AG04450 (cell line): ENCODE measurements at regions of chr21 and their contacts with region 1.

Region 1: DNA sequence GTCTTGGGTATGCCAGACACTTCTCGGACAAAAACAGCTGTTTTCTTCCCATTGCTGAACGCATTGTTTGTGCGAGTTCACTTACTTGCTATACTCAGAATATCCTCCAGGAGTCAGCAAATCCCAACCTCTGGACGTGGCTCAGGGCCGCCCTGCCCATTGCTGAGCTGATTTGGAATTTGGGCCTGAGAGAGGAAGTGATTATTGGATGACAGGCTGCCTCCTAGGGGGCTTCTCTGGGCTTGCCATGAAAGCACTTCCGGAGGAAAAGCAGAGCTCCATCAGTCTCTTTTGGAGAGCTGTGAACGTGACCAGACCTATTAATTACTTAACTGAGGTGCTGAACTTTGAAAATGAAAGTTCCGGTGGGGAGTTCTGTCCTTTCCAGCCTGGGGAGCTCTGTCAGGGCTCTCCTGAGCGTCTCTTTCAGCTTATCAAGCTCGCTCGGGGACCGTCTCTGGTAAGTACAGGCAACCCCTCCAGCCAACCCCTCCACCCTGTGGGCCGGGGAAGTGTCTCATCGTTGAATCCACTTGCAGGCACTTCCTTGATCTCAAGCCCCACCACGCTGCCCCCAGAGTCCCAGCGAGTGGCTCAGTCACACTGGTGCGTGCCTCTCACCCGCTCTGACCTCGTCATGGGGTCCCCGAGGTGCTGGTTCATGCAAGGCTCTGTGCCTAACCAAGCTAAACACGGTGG is 76.9 kb downstream of the CLIC6 start:
- DNase-seq: peak; percentile 73
- H3K4me3 ChIP-seq: peak overlapping the region; percentile 23; the same call in 1 of the 2 replicates
- H3K27ac ChIP-seq: no peak overlapping the region
- H3K27me3 ChIP-seq: peaks cover 6% of the 10 kb centered on the region
- CTCF ChIP-seq: peak; percentile 94

Region 2: GRCh38 chr21:34526618-34527290 is 219.0 kb before region 1 on chr21:
- CTCF ChIA-PET with region 1: no interaction called
- POLR2A ChIA-PET with region 1: no interaction called
- DNase-seq: peak; percentile 100
- H3K4me3 ChIP-seq: peak overlapping the region; percentile 71
- H3K27ac ChIP-seq: peak overlapping the region; percentile 93
- H3K27me3 ChIP-seq: no peaks in the 10 kb centered on the region
- CTCF ChIP-seq: no peak

Region 3: DNA sequence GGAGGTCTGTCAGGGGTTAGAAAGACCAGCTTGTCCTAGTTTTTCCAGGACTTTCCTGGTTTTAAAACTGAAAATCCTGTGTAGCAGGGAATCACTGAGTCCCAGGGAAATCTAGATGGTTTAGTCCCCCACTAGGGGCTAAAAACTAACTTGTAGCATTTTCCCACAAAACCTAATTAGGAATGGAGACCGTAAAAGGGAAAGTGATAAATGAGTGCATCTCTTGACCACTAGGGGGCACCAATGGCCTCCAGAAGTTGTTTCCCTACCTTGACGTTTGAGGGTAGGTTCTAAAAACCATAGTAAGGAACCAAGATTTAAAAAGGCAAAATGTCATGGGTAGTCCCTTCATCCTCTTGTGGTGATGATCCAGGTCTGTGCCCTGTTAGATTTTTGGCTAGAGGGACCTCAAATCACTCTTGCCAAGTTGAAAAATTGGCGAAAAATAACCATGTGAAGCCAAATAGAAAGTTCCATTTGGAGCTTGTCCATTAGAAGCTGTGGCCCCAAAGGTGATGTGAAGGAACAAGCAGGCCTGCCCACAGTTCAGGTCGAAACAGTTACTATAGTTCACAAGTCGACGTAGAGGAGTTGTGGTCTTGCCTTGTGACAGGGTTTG is 52.4 kb before region 1 on chr21:
- CTCF ChIA-PET with region 1: interaction called, 12 read pairs
- POLR2A ChIA-PET with region 1: no interaction called
- DNase-seq: peak; percentile 39
- H3K4me3 ChIP-seq: no peak overlapping the region
- H3K27ac ChIP-seq: no peak overlapping the region
- H3K27me3 ChIP-seq: peaks cover 36% of the 10 kb centered on the region
- CTCF ChIP-seq: peak; percentile 86

Region 4: DNA sequence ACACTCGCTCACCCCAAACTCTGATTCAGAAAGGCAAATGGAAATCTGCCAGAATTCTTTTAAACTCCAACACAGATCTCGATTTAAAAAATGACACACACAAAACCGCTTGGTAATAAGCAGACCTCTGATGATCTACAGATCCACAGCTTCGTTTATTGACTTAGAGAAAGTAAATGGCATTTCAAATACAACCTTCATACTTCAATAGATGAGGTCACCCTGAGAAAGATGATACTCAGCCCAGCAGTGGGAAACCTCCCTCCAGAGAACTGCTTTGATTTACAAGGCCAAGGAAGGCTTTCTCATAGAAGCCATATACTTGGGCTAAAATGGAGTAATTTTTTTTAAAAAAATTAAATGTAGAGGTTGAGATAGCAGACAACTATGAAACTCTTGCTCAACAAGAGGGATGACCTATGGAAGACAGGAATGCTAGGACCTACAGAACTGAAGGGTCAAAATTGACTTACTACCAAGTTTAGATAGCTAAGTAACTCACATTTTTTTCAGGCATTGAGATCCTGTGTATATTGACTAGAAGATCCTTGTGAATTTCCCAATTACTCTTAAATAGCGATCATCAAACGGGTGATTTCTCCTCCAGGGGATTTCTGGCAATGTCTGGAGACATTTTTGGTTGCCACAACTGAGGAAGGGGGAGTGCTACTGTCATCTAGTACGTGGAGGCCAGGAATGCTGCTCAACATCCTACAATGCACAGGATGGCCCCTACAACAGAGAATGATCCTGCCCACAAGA is 67.0 kb after region 1 on chr21:
- CTCF ChIA-PET with region 1: interaction called, 14 read pairs
- POLR2A ChIA-PET with region 1: interaction called, 5 read pairs
- DNase-seq: peak; percentile 95
- H3K4me3 ChIP-seq: no peak overlapping the region
- H3K27ac ChIP-seq: peak overlapping the region; percentile 99
- H3K27me3 ChIP-seq: no peaks in the 10 kb centered on the region
- CTCF ChIP-seq: no peak

Region 5: DNA sequence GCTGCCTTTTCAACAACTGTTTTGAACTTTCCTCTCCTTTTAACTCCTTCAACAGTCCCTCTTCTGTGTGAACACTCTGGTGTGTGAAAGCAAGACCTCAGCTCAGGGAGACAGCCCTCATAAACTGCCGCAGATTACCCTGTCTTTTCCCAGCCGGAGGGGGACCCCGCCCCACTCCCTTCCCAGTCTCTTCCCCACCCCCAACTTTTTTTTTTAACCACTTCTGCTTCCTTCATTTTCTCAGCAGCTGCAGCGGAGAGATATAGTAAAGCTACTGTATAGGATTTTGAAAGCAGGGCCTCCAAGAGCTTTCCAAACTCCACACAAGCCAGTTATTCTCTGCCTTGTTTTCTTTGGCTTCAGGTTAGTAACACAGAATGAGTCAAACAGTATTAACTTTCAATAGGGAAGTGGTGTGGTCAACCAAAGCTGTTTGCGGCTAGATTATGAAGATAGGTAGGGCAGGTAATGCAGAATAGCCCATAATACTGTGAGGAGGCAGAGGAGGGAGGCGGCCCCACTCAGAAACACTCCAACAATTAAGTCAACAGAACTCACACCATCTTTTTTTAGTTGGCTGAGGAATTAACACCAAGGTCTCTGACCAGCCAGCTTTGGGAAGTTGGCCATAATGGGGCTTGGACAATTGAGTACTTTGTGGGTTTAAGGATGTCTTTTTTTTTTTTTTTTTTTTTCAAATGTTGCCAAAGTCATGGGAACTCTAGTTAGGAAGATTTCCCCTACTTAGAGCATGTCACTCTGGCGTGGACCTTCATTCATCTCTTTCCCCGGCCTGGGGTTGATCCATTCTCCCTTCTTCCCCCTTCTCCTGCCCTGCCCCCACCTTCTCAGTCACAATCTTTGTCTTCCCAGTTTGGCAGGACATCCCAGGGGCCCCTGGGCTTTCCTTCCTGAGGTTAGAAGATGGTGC is 100.1 kb after region 1 on chr21:
- CTCF ChIA-PET with region 1: interaction called, 20 read pairs
- POLR2A ChIA-PET with region 1: interaction called, 9 read pairs
- DNase-seq: peak; percentile 51
- H3K4me3 ChIP-seq: no peak overlapping the region
- H3K27ac ChIP-seq: peak overlapping the region; percentile 65
- H3K27me3 ChIP-seq: no peaks in the 10 kb centered on the region
- CTCF ChIP-seq: no peak

Region 6: GRCh38 chr21:34874684-34875513 is 129.2 kb after region 1 on chr21:
- CTCF ChIA-PET with region 1: interaction called, 18 read pairs
- POLR2A ChIA-PET with region 1: no interaction called
- DNase-seq: no peak
- H3K4me3 ChIP-seq: no peak overlapping the region
- H3K27ac ChIP-seq: peak overlapping the region; percentile 25
- H3K27me3 ChIP-seq: no peaks in the 10 kb centered on the region
- CTCF ChIP-seq: no peak

Region 7: GRCh38 chr21:35204850-35205541 is 459.3 kb after region 1 on chr21:
- CTCF ChIA-PET with region 1: interaction called, 11 read pairs
- POLR2A ChIA-PET with region 1: interaction called, 3 read pairs
- DNase-seq: peak; percentile 93
- H3K4me3 ChIP-seq: peak overlapping the region; percentile 14
- H3K27ac ChIP-seq: peak overlapping the region; percentile 91
- H3K27me3 ChIP-seq: no peaks in the 10 kb centered on the region
- CTCF ChIP-seq: peak; percentile 41